Left cardiac atrium (tissue), 4 donors: ENCODE measurements at regions of chr9 and their contacts with region 1.

Region 1: GRCh38 chr9:31243386-31243785 is 1141.1 kb upstream of the ACO1 start:
- DNase-seq: no peak
- ATAC-seq: no peak

Region 2: DNA sequence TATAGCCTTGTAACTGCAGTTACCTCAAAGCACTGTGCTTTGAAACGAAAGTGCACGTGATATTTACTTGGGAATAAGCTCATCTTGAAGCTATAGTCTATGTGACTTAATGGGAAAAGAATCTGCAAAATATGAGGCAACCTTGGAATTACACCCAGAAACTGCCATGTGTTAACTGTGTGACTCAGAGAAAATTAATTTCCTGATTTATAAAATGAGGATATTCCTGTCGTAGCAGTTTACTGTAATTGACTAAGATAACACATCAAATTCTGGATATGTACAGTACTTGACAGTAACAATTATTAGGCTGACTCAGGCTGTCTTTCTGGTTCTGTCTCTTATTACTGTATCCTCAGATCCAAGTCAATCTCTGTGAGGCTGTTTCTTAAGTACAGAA is 61.2 kb after region 1 on chr9:
- intact Hi-C with region 1: loop called in 1 of 2 experiments (anchors 10 kb)
- DNase-seq: no peak
- ATAC-seq: peak; percentile 27 to 91